ENCODE measurements at regions of chr5 and their contacts with region 1.

Region 1: DNA sequence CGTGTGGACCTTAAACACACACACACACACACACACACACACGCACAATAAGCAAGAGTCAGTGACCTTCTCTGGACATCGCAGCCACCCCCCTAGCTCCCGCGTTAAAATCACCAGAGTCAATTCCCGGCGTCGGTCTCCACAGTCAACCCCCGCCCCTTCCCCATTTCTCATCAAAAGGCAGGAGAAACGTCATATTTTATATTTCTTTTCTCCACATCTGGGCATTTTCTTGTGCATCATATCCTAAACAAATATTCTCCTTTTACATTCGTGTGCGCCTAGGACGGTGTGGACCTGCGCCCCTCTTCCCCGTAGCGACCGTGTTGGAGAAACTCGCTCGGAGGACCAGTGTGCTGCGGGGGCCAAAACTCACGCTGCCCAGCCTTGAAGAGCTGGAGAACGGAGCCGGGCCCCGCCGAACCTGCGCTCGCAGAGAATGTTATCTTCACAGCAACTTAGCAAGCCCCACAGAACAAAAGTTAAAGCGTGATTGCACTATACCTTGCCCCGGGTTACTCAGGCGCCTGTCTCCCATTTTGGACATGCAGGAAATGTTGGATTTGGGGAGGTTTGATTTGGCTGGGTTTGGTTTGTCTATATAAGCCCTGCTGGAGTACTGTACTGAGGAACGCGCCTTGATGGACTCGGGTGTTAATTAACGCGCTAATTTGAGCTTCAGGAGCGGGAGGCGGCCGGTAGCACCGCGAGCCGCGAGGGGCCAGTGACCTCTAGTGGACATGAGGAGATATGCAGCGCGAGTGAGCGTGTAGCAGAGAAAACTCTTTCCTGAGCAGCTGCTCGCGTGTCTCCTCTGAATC is 192.4 kb downstream of the MEF2C start:
- DNase-seq: peak; percentile 63 to 82
- ATAC-seq: peak; percentile 90 to 95 (median 95)
- H3K4me3 ChIP-seq: no peak overlapping the region
- H3K4me3 Mint-ChIP-seq: peak overlapping the region; percentile 82
- H3K27ac ChIP-seq: no peak overlapping the region
- H3K27ac Mint-ChIP-seq: peak overlapping the region; percentile 34 to 87
- H3K4me1 ChIP-seq: peaks cover 11% of the 10 kb centered on the region
- H3K4me1 Mint-ChIP-seq: peaks cover 10 to 16% of the 10 kb centered on the region in 2 donors
- H3K27me3 ChIP-seq: peaks cover 87% of the 10 kb centered on the region
- H3K27me3 Mint-ChIP-seq: peaks cover 81% of the 10 kb centered on the region in 2 donors
- CTCF ChIP-seq: peak; percentile 98

Region 2: DNA sequence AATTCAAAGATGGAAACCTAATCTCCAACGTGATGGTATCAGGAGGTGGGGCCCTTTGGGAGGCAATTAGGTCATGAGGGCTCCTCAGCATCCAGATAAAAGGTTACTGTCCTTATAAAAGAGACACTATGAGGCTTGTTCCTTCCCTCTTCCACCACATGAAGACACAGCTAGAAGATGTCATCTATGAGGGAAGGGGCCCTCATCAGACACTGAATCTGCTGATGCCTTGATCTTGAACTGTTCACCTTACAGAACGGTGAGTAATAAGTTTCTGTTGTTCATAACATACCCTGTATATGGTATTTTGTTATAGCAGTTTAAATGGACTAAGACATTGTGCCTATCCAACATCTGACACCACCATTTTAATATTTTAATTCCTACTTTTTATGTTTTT is 1258.2 kb before region 1 on chr5:
- intact Hi-C with region 1: loop called (anchors 10 kb)
- DNase-seq: no peak
- ATAC-seq: no peak
- H3K4me3 ChIP-seq: no peak overlapping the region
- H3K4me3 Mint-ChIP-seq: no peak overlapping the region
- H3K27ac ChIP-seq: no peak overlapping the region
- H3K27ac Mint-ChIP-seq: no peak overlapping the region
- H3K4me1 ChIP-seq: no peaks in the 10 kb centered on the region
- H3K4me1 Mint-ChIP-seq: no peaks in the 10 kb centered on the region
- H3K27me3 ChIP-seq: no peaks in the 10 kb centered on the region
- H3K27me3 Mint-ChIP-seq: peaks cover 22 to 46% of the 10 kb centered on the region in 2 donors
- CTCF ChIP-seq: no peak

Region 3: DNA sequence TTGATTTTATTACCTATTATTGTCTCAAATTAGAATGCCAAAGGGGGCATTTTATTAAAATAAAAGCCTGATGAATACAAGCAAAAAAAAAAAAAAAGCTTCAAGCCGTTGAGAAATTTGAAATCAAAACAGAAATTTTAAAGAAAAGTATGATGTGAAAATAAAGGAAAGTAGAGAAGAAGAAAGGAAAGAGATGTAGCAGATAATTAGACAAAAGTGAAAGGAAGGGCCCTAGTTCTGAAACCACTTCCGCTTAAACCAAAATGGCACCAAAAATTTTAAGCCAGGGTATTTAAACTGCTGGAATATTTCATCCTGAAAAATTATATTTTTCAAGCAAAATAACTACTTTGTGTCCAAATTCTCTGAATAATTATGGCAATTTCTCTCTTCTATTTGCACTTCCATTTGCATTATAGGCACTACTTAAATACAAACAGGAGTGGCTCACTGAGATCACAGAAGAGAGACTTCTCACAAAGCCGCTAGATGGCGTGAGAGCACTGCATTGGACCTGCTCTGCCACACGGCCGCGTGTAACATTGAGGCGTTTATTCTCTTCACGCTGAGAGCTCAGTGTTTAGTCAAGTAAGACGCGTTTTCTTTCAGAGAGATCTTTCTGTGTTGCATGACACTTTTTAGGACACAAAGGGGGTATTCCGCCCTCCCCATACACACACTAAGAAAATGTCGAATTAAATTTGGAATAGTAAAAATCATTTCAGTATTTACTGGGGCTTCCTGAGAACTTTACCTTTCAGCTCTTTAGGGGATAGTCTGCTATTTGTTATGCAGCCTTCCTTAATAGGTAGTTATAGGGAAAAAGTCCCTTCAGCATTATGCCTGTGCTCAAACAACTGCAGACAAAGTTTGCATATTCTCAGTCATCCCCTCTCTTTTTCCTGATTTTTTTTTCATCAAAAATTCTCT is 909.5 kb before region 1 on chr5:
- intact Hi-C with region 1: loop called (anchors 1 kb)
- DNase-seq: peak; percentile 64 to 90
- ATAC-seq: peak; percentile 94 to 100 (median 100)
- H3K4me3 ChIP-seq: no peak overlapping the region
- H3K4me3 Mint-ChIP-seq: no peak overlapping the region
- H3K27ac ChIP-seq: no peak overlapping the region
- H3K27ac Mint-ChIP-seq: no peak overlapping the region
- H3K4me1 ChIP-seq: no peaks in the 10 kb centered on the region
- H3K4me1 Mint-ChIP-seq: no peaks in the 10 kb centered on the region
- H3K27me3 ChIP-seq: peaks cover 20% of the 10 kb centered on the region
- H3K27me3 Mint-ChIP-seq: peaks cover 26 to 69% of the 10 kb centered on the region in 2 donors
- CTCF ChIP-seq: peak; percentile 93

Measured in natural killer cell (primary cell).